Caco-2 (cell line): ENCODE measurements at regions of chr14 and their contacts with region 1.

Region 1: GRCh38 chr14:32202998-32203882 is at the start of gene RNU6-8:
- DNase-seq: peak; percentile 95
- H3K4me3 ChIP-seq: peak within 1 kb of the TSS; percentile 76
- H3K4me3 Mint-ChIP-seq: peak within 1 kb of the TSS; percentile 90
- H3K27ac Mint-ChIP-seq: peak within 1 kb of the TSS; percentile 98
- H3K4me1 ChIP-seq: 0 out of 2 replicates have a peak, but pooled peaks cover 5% of the 10 kb centered on the region
- H3K4me1 Mint-ChIP-seq: no peaks in the 10 kb centered on the region
- H3K27me3 ChIP-seq: no peaks in the 10 kb centered on the region
- H3K27me3 Mint-ChIP-seq: no peaks in the 10 kb centered on the region
- CTCF ChIP-seq: no peak
- total RNA-seq, gene RNU6-8: not detected in 2 replicates

Region 2: DNA sequence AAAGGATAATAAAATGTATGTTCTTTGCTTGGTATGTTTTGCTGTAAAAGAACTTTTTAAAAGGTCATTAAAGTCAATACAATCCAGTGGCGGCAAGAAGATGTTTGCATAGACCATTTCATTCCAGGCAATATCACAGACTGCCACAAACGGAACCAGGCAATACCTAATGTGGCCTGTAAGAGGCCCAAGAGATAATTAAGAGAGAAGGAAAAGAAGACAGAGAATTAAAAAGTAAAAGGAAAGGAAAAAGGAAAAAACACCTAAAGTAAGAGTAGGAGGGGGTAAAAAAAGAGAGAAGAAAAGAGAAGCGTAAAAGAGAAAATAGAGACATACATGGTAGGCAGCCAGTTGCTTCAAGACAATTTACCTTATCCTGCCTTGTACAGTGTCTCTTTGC is 133.0 kb before region 1 on chr14:
- CTCF ChIA-PET with region 1: no interaction called
- POLR2A ChIA-PET with region 1: no interaction called
- intact Hi-C with region 1: no loop called
- DNase-seq: no peak
- H3K4me3 ChIP-seq: no peak overlapping the region
- H3K4me3 Mint-ChIP-seq: no peak overlapping the region
- H3K27ac Mint-ChIP-seq: no peak overlapping the region
- H3K4me1 ChIP-seq: peaks cover 16% of the 10 kb centered on the region; the same call in 1 of the 2 replicates
- H3K4me1 Mint-ChIP-seq: peaks cover 20% of the 10 kb centered on the region
- H3K27me3 ChIP-seq: no peaks in the 10 kb centered on the region; the same call in 1 of the 2 replicates
- H3K27me3 Mint-ChIP-seq: no peaks in the 10 kb centered on the region
- CTCF ChIP-seq: peak in 1 of 2 experiments; percentile 11

Region 3: DNA sequence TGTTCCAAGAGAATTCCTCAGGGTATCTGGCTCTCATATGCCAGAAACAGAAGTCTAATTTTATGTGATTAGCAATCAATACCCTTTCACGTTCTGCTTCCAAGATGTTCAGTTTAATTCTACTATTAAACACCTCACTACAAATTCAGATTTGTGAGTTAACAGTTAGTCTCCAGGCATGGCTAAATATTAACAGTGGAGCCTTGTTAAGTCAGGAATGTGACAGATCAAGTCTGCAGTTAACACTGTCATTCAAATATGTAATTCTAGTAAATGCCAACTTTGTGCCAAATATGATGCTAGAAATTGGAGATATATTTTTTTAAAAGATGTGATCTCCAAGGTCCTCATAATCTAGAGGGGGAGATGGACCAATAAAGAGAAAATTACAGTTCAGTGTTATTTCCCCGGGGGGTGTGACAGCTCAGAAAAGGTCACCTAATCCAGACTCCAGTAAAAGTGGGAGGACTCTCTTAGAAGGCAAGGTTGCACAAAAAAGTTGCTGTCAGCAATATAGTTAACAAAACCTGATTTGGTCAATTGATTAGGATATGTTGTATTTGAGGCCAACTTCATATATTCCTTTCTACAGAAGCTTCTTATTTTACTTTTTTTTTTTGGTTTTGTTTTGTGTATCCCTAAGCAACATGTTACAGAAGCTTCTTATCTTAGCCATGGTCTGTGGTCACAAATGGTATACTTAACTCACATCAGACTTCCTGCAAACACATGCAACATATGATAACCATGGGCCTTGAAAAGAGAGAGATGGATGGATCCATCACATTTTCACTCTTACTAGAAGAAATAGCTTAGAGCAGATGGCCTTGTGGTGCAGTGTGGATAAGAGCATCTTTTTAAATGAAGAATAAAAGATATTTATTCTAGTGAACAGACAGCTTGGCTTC is 19.8 kb before region 1 on chr14:
- CTCF ChIA-PET with region 1: no interaction called
- POLR2A ChIA-PET with region 1: no interaction called
- intact Hi-C with region 1: loop called (anchors 1 kb)
- DNase-seq: no peak
- H3K4me3 ChIP-seq: no peak overlapping the region
- H3K4me3 Mint-ChIP-seq: peak overlapping the region; percentile 2
- H3K27ac Mint-ChIP-seq: no peak overlapping the region
- H3K4me1 ChIP-seq: peaks cover 15% of the 10 kb centered on the region
- H3K4me1 Mint-ChIP-seq: peaks cover 20% of the 10 kb centered on the region
- H3K27me3 ChIP-seq: no peaks in the 10 kb centered on the region
- H3K27me3 Mint-ChIP-seq: no peaks in the 10 kb centered on the region
- CTCF ChIP-seq: no peak

Region 4: DNA sequence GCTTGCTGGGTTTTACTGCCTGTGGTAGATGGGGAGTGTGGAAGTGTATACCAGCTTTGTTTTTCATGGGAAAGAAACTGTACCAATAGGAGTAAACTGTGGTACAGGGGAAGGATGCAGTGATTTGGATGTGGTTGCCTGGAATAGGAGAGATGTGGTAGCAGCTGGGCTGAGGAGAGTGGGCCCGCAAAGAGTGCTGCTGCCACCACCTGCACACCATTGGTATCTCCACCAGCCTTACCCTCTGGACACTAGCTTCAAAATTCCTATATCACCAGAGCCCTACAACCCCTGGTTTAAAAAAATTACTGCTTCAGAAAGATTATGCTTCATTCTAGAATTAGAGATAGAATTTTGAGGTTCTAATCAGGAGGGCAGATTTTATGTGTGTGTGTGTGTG is 179.5 kb after region 1 on chr14:
- CTCF ChIA-PET with region 1: no interaction called
- POLR2A ChIA-PET with region 1: no interaction called
- intact Hi-C with region 1: loop called (anchors 1 kb)
- DNase-seq: peak in 1 of 2 experiments; percentile 54
- H3K4me3 ChIP-seq: no peak overlapping the region
- H3K4me3 Mint-ChIP-seq: no peak overlapping the region
- H3K27ac Mint-ChIP-seq: no peak overlapping the region
- H3K4me1 ChIP-seq: peaks cover 64% of the 10 kb centered on the region
- H3K4me1 Mint-ChIP-seq: peaks cover 51% of the 10 kb centered on the region
- H3K27me3 ChIP-seq: no peaks in the 10 kb centered on the region
- H3K27me3 Mint-ChIP-seq: no peaks in the 10 kb centered on the region
- CTCF ChIP-seq: peak; percentile 23 to 63